Tibial artery (tissue), 4 donors: ENCODE measurements at regions of chr2 and their contacts with region 1.

Region 1: GRCh38 chr2:226791487-226792081 is 8.0 kb downstream of the IRS1 start:
- DNase-seq: peak; percentile 84 to 94
- H3K4me3 ChIP-seq: peak overlapping the region; percentile 69 to 83
- H3K27ac ChIP-seq: peak overlapping the region; percentile 88 to 96
- H3K4me1 ChIP-seq: peaks cover 0 to 85% (median 51%) of the 10 kb centered on the region in 4 donors
- H3K27me3 ChIP-seq: no peaks in the 10 kb centered on the region
- CTCF ChIP-seq: peak; percentile 62 to 82

Region 2: GRCh38 chr2:226478109-226478809 is 313.3 kb before region 1 on chr2:
- intact Hi-C with region 1: loop called (anchors 10 kb)
- DNase-seq: peak; percentile 84 to 91
- H3K4me3 ChIP-seq: no peak overlapping the region
- H3K27ac ChIP-seq: peak overlapping the region; percentile 87 to 89
- H3K4me1 ChIP-seq: peaks cover 0 to 42% (median 18%) of the 10 kb centered on the region in 4 donors
- H3K27me3 ChIP-seq: no peaks in the 10 kb centered on the region
- CTCF ChIP-seq: no peak

Region 3: GRCh38 chr2:226661789-226662545 is 129.6 kb before region 1 on chr2:
- intact Hi-C with region 1: loop called (anchors 5 kb)
- DNase-seq: no peak
- H3K4me3 ChIP-seq: no peak overlapping the region
- H3K27ac ChIP-seq: peak overlapping the region; percentile 45 to 70
- H3K4me1 ChIP-seq: peaks cover 0 to 63% (median 35%) of the 10 kb centered on the region in 4 donors
- H3K27me3 ChIP-seq: no peaks in the 10 kb centered on the region
- CTCF ChIP-seq: no peak

Region 4: DNA sequence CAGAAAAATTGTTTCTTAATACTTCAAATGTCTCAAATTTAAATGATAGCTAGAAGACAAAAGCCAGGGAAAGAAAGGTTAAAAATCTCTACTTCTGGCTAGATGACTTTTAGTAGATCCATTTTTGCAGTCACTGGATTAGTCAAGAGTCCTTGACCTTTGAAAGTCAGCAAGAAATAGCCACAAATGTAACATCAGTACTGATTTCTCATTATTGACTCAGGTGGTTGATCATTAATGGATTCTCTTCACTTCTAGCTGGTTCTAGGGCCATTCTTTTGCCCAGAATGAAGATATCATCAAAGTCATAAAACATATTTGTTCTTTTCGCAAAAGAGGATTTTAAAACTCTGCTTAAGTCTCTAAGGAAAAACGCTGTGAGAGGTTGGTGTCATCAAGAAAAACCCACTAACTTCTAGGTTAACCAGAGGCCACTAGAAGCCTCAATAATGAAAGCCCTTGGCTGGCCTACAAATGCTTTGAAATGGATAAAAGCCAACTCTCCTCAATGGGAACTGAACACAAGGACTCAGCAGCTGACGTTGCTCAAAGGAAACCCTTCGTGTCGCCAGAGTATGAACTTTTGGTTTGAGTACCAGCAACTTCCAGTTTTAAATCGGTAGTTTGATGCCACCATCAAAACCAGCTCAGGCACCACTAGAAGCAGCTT is 58.3 kb before region 1 on chr2:
- intact Hi-C with region 1: no loop called
- DNase-seq: no peak
- H3K4me3 ChIP-seq: no peak overlapping the region
- H3K27ac ChIP-seq: no peak overlapping the region
- H3K4me1 ChIP-seq: peaks cover 0 to 3% (median under 1%) of the 10 kb centered on the region in 4 donors
- H3K27me3 ChIP-seq: no peaks in the 10 kb centered on the region
- CTCF ChIP-seq: no peak